ENCODE measurements at regions of chr9 and their contacts with region 1.

Region 1: DNA sequence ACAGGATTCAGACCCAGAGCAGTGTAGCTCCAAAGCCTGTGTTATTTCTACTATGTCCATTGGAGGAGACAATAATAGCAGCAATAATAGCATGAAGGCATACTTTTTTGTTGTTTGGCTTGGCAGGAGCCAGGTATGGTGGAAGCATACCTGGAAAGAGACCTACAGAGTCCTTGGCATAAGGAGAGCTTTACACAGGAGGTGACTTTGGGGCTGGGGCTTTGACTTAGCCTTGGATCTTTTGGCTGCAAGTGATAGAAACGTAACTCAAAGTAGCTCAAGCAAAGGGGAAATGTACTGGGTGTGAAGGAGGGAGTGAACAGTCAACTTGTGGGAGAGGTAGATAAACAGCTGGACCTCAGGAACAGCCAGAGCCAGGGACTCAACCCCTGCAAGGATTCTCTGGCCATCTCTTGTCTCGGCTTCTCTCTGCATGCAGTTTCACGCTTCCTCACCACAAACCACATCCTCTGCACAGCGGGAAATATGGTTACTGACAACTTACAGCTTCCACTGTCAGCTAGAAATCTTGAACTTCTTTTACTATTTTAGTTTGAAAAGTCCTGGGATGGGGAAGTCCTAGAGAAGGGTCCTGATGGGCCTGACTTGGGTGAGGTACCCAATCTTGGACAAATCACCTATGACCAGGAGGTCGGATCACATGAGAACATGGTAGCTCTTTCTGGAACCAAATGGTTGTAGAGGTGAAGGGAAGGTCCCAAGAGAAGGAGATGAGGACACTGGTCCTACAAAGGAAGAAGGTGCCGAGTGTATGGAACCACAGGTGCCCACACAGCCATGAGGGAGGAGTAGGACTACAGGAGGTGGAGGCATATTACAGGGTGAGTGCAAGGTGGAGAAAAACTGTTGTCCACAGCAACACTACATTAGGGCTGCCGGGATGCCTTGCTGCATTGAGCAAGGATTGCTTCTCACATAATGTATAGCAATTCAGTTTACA is 47.0 kb upstream of the TGFBR1 start:
- DNase-seq: peak; percentile 95
- H3K4me3 Mint-ChIP-seq: peak overlapping the region; percentile 53
- H3K27ac Mint-ChIP-seq: peak overlapping the region; percentile 73
- H3K4me1 Mint-ChIP-seq: peaks cover 58% of the 10 kb centered on the region
- H3K27me3 Mint-ChIP-seq: peaks cover 2% of the 10 kb centered on the region

Region 2: GRCh38 chr9:98807070-98807810 is 250.7 kb before region 1 on chr9 and contains the start of gene GALNT12:
- CTCF ChIA-PET with region 1: no interaction called
- intact Hi-C with region 1: loop called (anchors 1 kb)
- DNase-seq: peak; percentile 56
- H3K4me3 Mint-ChIP-seq: peak within 1 kb of the TSS; percentile 82
- H3K27ac Mint-ChIP-seq: no peak within 1 kb of the TSS
- H3K4me1 Mint-ChIP-seq: peaks cover 42% of the 10 kb centered on the region
- H3K27me3 Mint-ChIP-seq: no peaks in the 10 kb centered on the region
- total RNA-seq, gene GALNT12: 12.9 to 13.5 TPM

Region 3: DNA sequence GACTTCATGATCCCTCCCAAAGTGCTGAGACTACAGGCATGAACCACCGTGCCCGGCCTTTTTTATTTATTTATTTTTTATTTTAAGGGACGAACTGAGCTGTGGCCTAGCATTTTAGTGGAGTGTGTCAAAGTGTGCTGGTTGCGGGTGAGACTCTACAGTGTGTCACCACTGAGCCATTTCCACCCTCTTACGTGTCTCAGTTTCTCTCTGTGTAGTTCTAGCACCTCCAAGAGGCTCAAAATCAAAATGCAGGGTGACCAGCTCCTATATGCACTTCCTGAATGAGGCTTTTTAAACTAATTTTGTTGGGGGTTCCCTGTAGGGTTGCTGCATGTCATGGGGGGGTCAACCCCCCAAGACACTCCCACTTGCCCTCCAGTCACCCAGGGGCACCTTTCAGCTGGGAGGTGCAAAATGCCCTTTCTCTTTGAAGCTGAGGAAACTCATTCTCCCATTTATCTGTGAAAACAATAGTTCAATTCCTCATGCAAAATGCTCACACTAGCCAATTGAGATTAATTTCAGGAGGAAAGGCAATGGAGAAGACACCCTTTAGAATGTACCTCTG is 44.9 kb before region 1 on chr9:
- CTCF ChIA-PET with region 1: interaction called, 3 read pairs
- intact Hi-C with region 1: loop called (anchors 1 kb)
- DNase-seq: peak; percentile 26
- H3K4me3 Mint-ChIP-seq: no peak overlapping the region
- H3K27ac Mint-ChIP-seq: peak overlapping the region; percentile 72
- H3K4me1 Mint-ChIP-seq: peaks cover 20% of the 10 kb centered on the region
- H3K27me3 Mint-ChIP-seq: no peaks in the 10 kb centered on the region

Region 4: DNA sequence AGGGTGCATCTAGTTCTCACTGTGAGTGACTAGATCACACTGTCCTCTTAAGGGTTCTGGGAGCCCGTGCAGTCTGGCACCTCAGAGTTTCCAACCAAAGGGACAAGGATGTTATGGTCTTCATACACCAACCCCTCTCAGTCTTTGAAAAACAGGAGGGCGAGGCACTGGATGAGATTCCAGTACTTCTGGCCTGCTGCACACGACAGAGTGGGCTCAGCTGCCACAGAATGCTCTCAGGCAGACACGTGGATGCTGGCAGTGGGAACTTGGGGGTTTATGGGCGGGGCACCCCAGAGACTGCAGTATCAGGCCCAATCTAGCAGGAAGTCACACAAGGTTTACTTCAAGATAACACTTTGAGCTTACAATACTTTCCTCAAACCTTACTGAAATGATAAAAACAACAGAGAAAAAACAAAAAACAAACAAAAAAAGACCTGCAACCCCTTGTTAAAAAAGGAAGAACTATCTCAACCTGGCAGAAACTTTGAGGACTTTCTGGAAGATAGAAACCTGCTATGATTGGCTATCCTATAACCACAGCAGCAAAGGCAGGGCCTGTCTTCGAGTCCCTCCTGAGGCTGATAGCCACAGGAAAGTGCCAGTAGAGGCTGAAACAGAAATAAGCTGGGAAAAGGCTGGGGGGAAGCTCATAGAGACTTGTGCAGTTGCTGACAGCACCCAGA is 18.7 kb after region 1 on chr9:
- CTCF ChIA-PET with region 1: no interaction called
- intact Hi-C with region 1: loop called (anchors 2 kb)
- DNase-seq: peak; percentile 30
- H3K4me3 Mint-ChIP-seq: no peak overlapping the region
- H3K27ac Mint-ChIP-seq: no peak overlapping the region
- H3K4me1 Mint-ChIP-seq: peaks cover 23% of the 10 kb centered on the region
- H3K27me3 Mint-ChIP-seq: no peaks in the 10 kb centered on the region

Region 5: DNA sequence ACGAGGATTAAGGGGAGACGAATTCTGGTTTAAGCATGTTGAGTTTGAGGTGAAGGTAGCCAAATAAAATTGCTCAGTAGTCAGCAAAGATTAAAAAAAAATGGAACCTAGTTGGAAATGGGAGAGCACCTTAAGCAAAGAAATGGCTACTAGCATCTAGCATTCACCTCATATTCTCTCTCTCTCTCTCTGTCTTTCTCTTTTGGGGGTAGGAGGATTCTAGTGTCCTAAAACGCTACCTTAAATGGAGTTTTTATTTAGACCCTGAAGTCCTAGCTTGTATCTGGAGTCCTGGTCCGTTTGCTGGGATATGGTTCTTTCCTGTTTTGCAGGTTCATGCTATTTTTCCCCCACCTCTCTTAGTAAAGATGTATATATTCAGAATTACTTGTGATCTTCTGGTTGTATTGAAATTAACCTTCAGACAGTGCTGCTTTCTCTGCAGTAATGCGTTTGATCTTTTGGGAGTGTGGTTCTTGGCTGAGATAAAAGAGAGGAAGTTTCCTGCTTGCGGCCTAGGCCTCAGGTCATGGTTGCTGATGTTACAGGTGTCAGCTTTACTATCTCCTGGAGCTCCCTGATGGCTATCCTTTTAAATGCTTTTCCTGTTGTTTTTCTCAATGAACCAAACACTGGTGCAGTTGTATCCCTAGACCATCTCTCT is 54.9 kb after region 1 on chr9:
- CTCF ChIA-PET with region 1: interaction called, 4 read pairs
- intact Hi-C with region 1: loop called (anchors 1 kb)
- DNase-seq: peak; percentile 58
- H3K4me3 Mint-ChIP-seq: peak overlapping the region; percentile 57
- H3K27ac Mint-ChIP-seq: peak overlapping the region; percentile 73
- H3K4me1 Mint-ChIP-seq: peaks cover 83% of the 10 kb centered on the region
- H3K27me3 Mint-ChIP-seq: no peaks in the 10 kb centered on the region

Region 6: GRCh38 chr9:99130069-99130468 is 72.1 kb after region 1 on chr9:
- CTCF ChIA-PET with region 1: no interaction called
- intact Hi-C with region 1: loop called (anchors 1 kb)
- DNase-seq: peak; percentile 20
- H3K4me3 Mint-ChIP-seq: no peak overlapping the region
- H3K27ac Mint-ChIP-seq: peak overlapping the region; percentile 54
- H3K4me1 Mint-ChIP-seq: peaks cover 73% of the 10 kb centered on the region
- H3K27me3 Mint-ChIP-seq: no peaks in the 10 kb centered on the region

Region 7: GRCh38 chr9:99807276-99807852 is 749.4 kb after region 1 on chr9:
- CTCF ChIA-PET with region 1: no interaction called
- intact Hi-C with region 1: loop called (anchors 2 kb)
- DNase-seq: peak; percentile 79
- H3K4me3 Mint-ChIP-seq: no peak overlapping the region
- H3K27ac Mint-ChIP-seq: no peak overlapping the region
- H3K4me1 Mint-ChIP-seq: peaks cover 21% of the 10 kb centered on the region
- H3K27me3 Mint-ChIP-seq: no peaks in the 10 kb centered on the region